ENCODE measurements at regions of chr2 and their contacts with region 1.

Region 1: GRCh38 chr2:179422037-179422643 is 157.5 kb upstream of the SESTD1 start:
- DNase-seq: peak; percentile 84
- H3K4me3 ChIP-seq: no peak overlapping the region
- H3K27ac ChIP-seq: no peak overlapping the region
- H3K4me1 ChIP-seq: no peaks in the 10 kb centered on the region
- H3K27me3 ChIP-seq: no peaks in the 10 kb centered on the region

Region 2: DNA sequence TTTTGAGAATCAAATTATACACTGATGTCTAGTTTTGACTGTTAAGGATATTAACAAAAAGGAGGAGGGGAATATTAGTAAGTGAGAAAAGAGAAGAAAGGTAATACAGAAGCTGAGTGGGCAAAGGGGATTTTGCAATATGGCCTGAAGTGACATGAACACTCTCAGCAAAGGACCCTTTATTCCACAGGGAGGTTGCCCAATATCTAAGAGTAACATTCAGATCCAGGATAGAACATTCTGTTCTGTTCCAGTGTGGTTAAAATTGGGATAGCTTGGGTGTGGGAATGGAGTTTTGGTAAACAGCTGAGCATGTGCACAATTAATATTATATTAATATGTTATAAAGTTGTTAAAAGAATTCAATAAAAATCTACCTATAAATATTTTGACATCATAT is 319.2 kb after region 1 on chr2:
- in situ Hi-C with region 1: loop called (anchors 5 kb)
- DNase-seq: no peak
- H3K4me3 ChIP-seq: no peak overlapping the region
- H3K27ac ChIP-seq: no peak overlapping the region
- H3K4me1 ChIP-seq: no peaks in the 10 kb centered on the region
- H3K27me3 ChIP-seq: no peaks in the 10 kb centered on the region

Region 3: DNA sequence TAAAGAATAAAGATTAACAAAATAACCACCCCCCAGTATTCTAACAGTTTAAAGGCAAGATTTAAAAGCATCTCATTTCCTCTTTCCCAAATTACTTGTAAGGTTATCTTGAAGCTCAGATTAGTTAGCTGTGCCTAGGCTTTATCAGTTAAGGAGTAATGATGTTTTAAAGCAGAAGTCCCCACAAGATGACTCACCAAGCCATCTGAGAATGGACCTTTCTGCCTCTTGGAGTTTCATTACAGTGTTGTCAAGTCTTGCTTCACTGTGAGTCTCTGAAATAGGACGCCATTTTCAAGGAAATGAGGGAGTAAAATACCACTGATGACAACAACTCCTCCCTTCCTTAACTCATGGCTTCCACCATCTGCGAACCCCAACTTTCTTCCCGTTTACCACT is 403.4 kb after region 1 on chr2:
- in situ Hi-C with region 1: no loop called
- DNase-seq: no peak
- H3K4me3 ChIP-seq: no peak overlapping the region
- H3K27ac ChIP-seq: no peak overlapping the region
- H3K4me1 ChIP-seq: no peaks in the 10 kb centered on the region
- H3K27me3 ChIP-seq: no peaks in the 10 kb centered on the region

Measured in GM23248 (cell line).